SK-MEL-5 (cell line): ENCODE measurements at regions of chr20 and their contacts with region 1.

Region 1: DNA sequence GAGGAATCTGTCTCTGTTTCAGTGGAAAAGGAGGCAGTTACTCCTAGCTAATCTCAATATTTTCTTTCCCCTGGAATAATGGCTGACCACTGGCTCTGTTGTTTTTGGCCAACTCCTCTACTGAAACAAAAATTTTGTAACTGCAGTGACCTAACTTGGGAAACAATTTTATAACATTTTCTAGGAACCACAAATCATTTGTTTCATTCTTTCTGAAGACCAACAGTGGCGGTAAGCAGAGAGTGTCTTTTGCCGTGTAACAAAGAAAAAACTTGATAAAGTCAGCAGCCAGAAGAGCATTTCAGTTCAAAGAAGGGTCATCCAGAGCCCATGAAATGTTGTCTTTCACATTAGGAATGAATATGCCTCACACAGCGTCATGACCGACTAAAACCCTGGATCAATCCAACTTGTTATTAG is 11.8 kb upstream of the BFSP1 start:
- DNase-seq: peak; percentile 93

Region 2: DNA sequence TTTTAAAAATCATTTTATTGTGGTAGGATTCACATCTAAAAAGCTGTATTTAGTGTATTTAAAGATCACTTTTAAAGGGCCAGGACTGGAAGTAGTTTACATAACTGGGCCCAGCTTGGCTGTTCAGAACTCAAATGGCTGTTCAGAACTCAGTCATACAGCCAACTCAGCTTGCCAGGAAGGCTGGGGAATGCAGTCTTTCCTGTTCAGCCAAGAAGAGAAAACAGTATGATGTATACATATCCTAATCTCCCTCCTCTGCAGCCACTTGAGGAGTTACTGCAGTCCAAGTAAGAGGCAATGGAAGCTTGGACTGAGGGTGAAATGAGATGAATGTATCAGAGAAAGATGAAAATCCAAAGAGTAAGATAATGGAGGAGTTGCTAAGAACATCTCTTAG is 51.4 kb after region 1 on chr20:
- in situ Hi-C with region 1: loop called (anchors 5 kb)
- DNase-seq: no peak